ENCODE measurements at regions of chr18 and their contacts with region 1.

Region 1: DNA sequence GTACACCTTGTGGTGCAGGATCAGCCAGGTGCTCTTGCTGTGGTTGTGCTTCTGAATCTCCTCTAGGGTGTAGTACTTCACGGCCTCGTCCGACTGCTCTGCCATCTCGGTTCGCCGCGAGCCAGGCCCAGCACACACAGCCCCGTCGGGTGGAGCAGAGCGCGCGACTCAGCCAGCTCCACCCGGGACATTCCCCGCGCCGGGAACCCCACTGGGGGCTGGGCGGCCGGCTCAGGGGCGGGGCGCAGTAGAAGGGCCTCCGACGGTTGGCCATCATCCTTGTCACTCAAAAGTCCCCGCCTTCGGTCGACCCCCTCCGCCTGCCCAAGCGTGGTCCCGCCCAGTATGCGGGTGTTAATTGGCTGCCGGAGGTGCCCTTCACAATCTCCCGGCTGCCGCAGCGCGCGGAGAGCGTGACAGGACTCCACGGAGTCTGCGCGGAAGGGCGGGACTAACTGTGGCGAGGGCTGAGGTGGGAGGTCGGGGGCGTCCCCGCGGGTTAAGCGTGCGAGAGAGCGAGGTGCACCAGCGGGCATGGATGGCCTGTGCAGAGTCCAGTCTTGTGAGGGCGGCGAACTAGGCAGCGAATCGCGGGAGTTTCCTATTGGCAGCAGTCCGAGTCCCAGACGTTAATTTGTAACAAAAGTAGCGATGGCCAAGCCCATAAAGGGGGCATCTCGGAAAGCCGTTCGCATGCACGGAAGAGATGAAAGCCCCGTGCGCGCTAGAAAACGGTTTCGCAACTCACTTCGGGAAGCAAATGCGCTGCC is at the start of gene CYB5A:
- DNase-seq: peak; percentile 98
- ATAC-seq: peak; percentile 93
- H3K4me3 ChIP-seq: peak within 1 kb of the TSS; percentile 82 to 94 (median 91)
- H3K27ac ChIP-seq: peak within 1 kb of the TSS; percentile 94
- H3K4me1 ChIP-seq: peaks cover 50% of the 10 kb centered on the region
- H3K27me3 ChIP-seq: no peaks in the 10 kb centered on the region; a peak in 1 of 5 replicates
- CTCF ChIP-seq: peak; percentile 13; the same call in 1 of the 2 replicates
- EP300 ChIP-seq: peak; percentile 26 to 74; a peak in 2 of 4 replicates
- POLR2A ChIP-seq: peak; percentile 60 to 72
- RAD21 ChIP-seq: 0 out of 2 replicates have a peak, but pooled peaks have one; percentile 32
- total RNA-seq, gene CYB5A: 356 and 411 TPM in 2 replicates

Region 2: DNA sequence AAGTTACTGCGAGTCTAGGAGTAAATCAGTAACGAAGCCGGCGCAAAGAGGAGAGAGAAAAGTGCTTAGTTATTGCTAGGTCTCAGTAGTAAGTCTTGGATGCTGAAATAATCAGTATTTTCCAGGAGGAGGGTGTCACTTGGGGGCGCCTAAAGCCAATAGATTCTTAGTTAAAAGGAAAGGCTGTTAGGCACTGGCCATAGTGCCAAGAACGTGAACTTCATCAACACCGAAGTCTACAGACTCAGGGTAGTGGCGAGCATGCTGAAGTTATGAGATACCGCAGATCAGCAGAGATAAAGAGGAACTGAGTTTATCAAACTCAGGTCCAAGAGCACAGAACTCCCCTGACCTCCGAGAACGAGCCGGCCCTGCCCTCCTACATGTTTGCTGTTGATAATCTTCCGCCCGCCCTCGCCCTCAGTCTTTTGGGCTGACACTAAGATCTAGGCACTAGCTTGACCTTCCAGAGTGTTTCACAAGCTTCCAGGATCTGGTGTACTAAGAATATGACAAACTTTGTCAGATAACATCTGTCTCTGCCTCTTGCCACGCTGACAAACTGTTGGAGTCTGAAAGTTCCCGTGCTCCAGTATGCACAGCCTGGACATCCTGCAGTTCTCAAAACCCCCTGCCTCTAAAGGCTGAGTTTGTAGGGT is 49.4 kb before region 1 on chr18:
- CTCF ChIA-PET with region 1: no interaction called
- POLR2A ChIA-PET with region 1: interaction called, 3 read pairs
- in situ Hi-C with region 1: no loop called
- intact Hi-C with region 1: loop called (anchors 2 kb)
- DNase-seq: peak; percentile 65
- ATAC-seq: peak; percentile 84
- H3K4me3 ChIP-seq: peak overlapping the region; percentile 26 to 60 (median 37)
- H3K27ac ChIP-seq: peak overlapping the region; percentile 78
- H3K4me1 ChIP-seq: peaks cover 47% of the 10 kb centered on the region
- H3K27me3 ChIP-seq: no peaks in the 10 kb centered on the region
- CTCF ChIP-seq: peak; percentile 78
- EP300 ChIP-seq: peak in 1 of 2 experiments; percentile 4; a peak in 1 of 4 replicates
- POLR2A ChIP-seq: peak; percentile 23 to 31; a peak in 2 of 4 replicates
- RAD21 ChIP-seq: 0 out of 2 replicates have a peak, but pooled peaks have one; percentile 21

Region 3: GRCh38 chr18:74255131-74255616 is 36.8 kb before region 1 on chr18:
- CTCF ChIA-PET with region 1: no interaction called
- POLR2A ChIA-PET with region 1: no interaction called
- in situ Hi-C with region 1: no loop called
- intact Hi-C with region 1: no loop called
- DNase-seq: no peak
- ATAC-seq: no peak
- H3K4me3 ChIP-seq: no peak overlapping the region
- H3K27ac ChIP-seq: no peak overlapping the region
- H3K4me1 ChIP-seq: peaks cover 37% of the 10 kb centered on the region
- H3K27me3 ChIP-seq: no peaks in the 10 kb centered on the region
- CTCF ChIP-seq: no peak
- EP300 ChIP-seq: no peak
- POLR2A ChIP-seq: no peak
- RAD21 ChIP-seq: no peak

Region 4: DNA sequence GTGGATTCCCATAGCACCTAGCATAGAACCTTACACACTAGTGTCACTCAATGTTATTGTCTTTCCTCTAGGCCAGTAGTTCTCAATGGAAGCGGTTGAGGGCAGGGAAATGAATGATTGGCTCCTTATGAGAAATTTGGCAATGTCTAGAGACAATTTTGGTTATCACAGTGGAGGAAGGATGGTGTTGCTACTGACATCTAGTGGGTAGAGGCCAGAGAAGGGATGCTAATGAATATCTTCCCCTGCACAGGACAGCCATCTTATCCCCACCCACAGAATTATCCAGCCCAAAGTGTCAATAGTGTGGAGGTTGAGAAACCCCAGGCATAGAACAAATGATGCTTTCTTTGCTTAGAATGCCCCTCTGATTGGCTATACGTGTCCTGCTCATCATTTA is 39.4 kb after region 1 on chr18:
- CTCF ChIA-PET with region 1: no interaction called
- POLR2A ChIA-PET with region 1: no interaction called
- in situ Hi-C with region 1: no loop called
- intact Hi-C with region 1: loop called (anchors 2 kb)
- DNase-seq: peak; percentile 43
- ATAC-seq: peak; percentile 87
- H3K4me3 ChIP-seq: no peak overlapping the region
- H3K27ac ChIP-seq: no peak overlapping the region
- H3K4me1 ChIP-seq: peaks cover 13% of the 10 kb centered on the region
- H3K27me3 ChIP-seq: no peaks in the 10 kb centered on the region
- CTCF ChIP-seq: peak; percentile 79
- EP300 ChIP-seq: no peak
- POLR2A ChIP-seq: no peak
- RAD21 ChIP-seq: peak; percentile 48; the same call in 1 of the 2 replicates

Region 5: DNA sequence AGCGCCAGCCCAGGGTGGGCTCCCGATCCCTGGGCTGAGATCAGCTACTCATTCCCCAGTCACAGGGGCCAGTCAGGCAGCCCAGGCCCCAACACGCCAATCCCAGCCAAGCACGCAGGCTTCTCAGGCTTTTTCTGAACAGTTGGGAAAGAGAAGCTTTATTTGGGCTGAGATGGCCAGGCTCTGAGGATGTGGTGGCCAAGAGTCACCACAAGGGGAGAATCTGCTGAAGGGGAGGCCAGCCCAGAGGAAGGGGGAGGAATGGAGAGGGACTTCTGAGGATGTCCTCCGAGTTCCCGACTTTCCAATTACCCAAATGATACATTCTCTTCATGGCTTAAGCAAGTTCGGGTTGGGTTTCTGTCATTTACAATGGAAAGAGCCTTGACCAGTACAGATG is 167.9 kb after region 1 on chr18:
- CTCF ChIA-PET with region 1: no interaction called
- POLR2A ChIA-PET with region 1: no interaction called
- in situ Hi-C with region 1: no loop called
- intact Hi-C with region 1: no loop called
- DNase-seq: no peak
- ATAC-seq: peak; percentile 88
- H3K4me3 ChIP-seq: no peak overlapping the region
- H3K27ac ChIP-seq: no peak overlapping the region
- H3K4me1 ChIP-seq: no peaks in the 10 kb centered on the region
- H3K27me3 ChIP-seq: peaks cover 2 to 43% of the 10 kb centered on the region in 2 experiments; a peak in 4 of 5 replicates
- CTCF ChIP-seq: no peak
- EP300 ChIP-seq: no peak
- POLR2A ChIP-seq: no peak
- RAD21 ChIP-seq: no peak

Region 6: GRCh38 chr18:74856434-74856833 is 564.5 kb after region 1 on chr18:
- CTCF ChIA-PET with region 1: no interaction called
- POLR2A ChIA-PET with region 1: no interaction called
- in situ Hi-C with region 1: no loop called
- intact Hi-C with region 1: no loop called
- DNase-seq: no peak
- ATAC-seq: no peak
- H3K4me3 ChIP-seq: no peak overlapping the region
- H3K27ac ChIP-seq: no peak overlapping the region
- H3K4me1 ChIP-seq: no peaks in the 10 kb centered on the region
- H3K27me3 ChIP-seq: no peaks in the 10 kb centered on the region
- CTCF ChIP-seq: no peak
- EP300 ChIP-seq: no peak
- POLR2A ChIP-seq: no peak
- RAD21 ChIP-seq: no peak